Transverse colon (tissue), 4 donors: ENCODE measurements at regions of chr3 and their contacts with region 1.

Region 1: GRCh38 chr3:39288300-39288808 is 8.5 kb upstream of the CX3CR1 start:
- DNase-seq: peak; percentile 87
- H3K4me3 ChIP-seq: no peak overlapping the region
- H3K27ac ChIP-seq: no peak overlapping the region
- H3K4me1 ChIP-seq: peaks cover 3 to 13% (median 10%) of the 10 kb centered on the region in 4 donors
- H3K27me3 ChIP-seq: no peaks in the 10 kb centered on the region
- CTCF ChIP-seq: peak; percentile 72 to 88 (median 81)
- EP300 ChIP-seq: no peak
- POLR2A ChIP-seq: no peak

Region 2: GRCh38 chr3:39126532-39127071 is 161.8 kb before region 1 on chr3:
- in situ Hi-C with region 1: loop called in 3 of 4 experiments (anchors 10 kb)
- intact Hi-C with region 1: loop called (anchors 2 kb)
- DNase-seq: peak; percentile 56
- H3K4me3 ChIP-seq: no peak overlapping the region
- H3K27ac ChIP-seq: no peak overlapping the region
- H3K4me1 ChIP-seq: peaks cover 2 to 10% (median 8%) of the 10 kb centered on the region in 4 donors
- H3K27me3 ChIP-seq: no peaks in the 10 kb centered on the region
- CTCF ChIP-seq: peak; percentile 47 to 78 (median 51)
- EP300 ChIP-seq: no peak
- POLR2A ChIP-seq: no peak

Region 3: GRCh38 chr3:39180546-39181346 is 107.6 kb before region 1 on chr3:
- in situ Hi-C with region 1: loop called in 2 of 4 experiments (anchors 5 to 25 kb)
- intact Hi-C with region 1: no loop called
- DNase-seq: peak; percentile 97
- H3K4me3 ChIP-seq: peak overlapping the region in 3 of 4 donors; percentile 24 to 42 (median 31)
- H3K27ac ChIP-seq: peak overlapping the region; percentile 79 to 94 (median 80)
- H3K4me1 ChIP-seq: peaks cover 20 to 43% (median 30%) of the 10 kb centered on the region in 4 donors
- H3K27me3 ChIP-seq: no peaks in the 10 kb centered on the region
- CTCF ChIP-seq: peak; percentile 27 to 60 (median 29)
- EP300 ChIP-seq: peak; percentile 72
- POLR2A ChIP-seq: peak; percentile 50

Region 4: GRCh38 chr3:39189959-39190269 is 98.4 kb before region 1 on chr3:
- in situ Hi-C with region 1: loop called in 3 of 4 experiments (anchors 5 to 25 kb)
- intact Hi-C with region 1: loop called (anchors 5 kb)
- DNase-seq: peak; percentile 74
- H3K4me3 ChIP-seq: no peak overlapping the region
- H3K27ac ChIP-seq: no peak overlapping the region
- H3K4me1 ChIP-seq: no peaks in the 10 kb centered on the region
- H3K27me3 ChIP-seq: no peaks in the 10 kb centered on the region
- CTCF ChIP-seq: peak; percentile 76 to 85 (median 81)
- EP300 ChIP-seq: no peak
- POLR2A ChIP-seq: no peak

Region 5: DNA sequence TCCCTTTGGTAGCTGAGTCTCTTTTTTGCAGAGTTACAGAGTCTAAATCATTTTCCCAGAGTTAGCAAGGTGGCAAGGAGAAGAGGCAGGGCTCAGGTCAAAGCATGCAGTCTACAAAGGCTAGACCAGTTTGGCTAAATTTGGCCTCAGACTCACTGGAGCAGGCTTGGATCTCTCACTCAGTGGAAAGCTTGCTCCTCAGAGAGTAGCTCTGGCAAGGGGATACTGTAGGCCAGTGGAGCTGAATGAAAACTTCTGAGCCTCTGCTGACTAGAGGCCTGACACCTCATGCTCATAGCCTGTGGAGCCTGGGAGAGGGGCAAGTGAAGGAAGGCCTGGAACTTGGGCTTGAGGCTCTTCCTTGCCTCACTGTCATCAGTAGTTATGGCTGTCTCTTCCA is 280.2 kb after region 1 on chr3:
- in situ Hi-C with region 1: no loop called
- intact Hi-C with region 1: no loop called
- DNase-seq: no peak
- H3K4me3 ChIP-seq: no peak overlapping the region
- H3K27ac ChIP-seq: no peak overlapping the region
- H3K4me1 ChIP-seq: no peaks in the 10 kb centered on the region
- H3K27me3 ChIP-seq: no peaks in the 10 kb centered on the region
- CTCF ChIP-seq: no peak
- EP300 ChIP-seq: no peak
- POLR2A ChIP-seq: no peak